ENCODE measurements at regions of chr12 and their contacts with region 1.

Region 1: DNA sequence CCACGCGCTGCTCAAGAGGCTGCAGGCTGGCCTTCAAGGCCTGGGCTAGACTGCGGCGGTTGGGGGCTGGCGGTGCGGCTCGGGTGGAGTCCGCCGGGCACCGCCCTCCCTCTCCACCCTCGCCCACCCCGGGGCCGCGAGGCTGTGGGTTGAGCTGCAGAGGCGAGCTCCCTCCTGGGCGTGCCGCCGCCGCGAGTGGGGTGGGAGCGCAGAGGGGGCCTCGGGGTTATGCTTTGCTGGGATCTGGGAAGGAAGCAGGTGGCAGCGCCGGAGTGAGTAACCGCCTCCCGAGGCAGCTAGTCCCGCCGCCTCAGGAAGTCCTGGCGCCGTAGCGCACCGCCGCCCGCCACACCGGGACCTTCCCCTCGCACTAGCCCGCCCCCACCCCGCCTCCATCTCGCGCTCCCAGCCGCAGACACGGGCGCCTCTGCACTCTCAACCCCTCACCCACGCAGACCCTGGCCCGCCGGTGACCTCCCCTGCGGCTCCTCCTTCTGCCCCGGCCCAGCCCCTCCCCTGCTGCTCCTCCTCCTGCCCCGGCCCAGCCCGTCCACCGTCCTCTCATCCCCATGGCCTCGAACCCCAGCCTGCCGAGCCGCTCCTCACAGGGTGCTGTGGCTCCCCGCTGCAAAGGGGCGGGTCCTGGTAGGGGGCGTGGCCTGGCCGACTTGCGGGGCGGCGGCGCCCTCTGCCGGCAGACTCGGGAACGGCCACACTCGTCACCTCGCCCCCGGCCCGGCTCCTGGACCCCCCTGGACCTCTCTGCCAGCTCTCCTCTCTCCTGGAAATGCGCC is 16.6 kb downstream of the TAMALIN start:
- DNase-seq: peak; percentile 59
- ATAC-seq: peak; percentile 56
- H3K4me3 ChIP-seq: peak overlapping the region; percentile 57 to 85 (median 63)
- H3K27ac ChIP-seq: peak overlapping the region; percentile 16
- H3K4me1 ChIP-seq: peaks cover 59% of the 10 kb centered on the region
- H3K27me3 ChIP-seq: no peaks in the 10 kb centered on the region; a peak in 1 of 5 replicates
- CTCF ChIP-seq: peak; percentile 99
- EP300 ChIP-seq: no peak
- POLR2A ChIP-seq: no peak
- RAD21 ChIP-seq: peak; percentile 94

Region 2: GRCh38 chr12:51994959-51995358 is 28.4 kb before region 1 on chr12:
- CTCF ChIA-PET with region 1: interaction called, 99 read pairs
- POLR2A ChIA-PET with region 1: interaction called, 5 read pairs
- in situ Hi-C with region 1: no loop called
- intact Hi-C with region 1: loop called (anchors 1 kb)
- DNase-seq: no peak
- ATAC-seq: no peak
- H3K4me3 ChIP-seq: no peak overlapping the region
- H3K27ac ChIP-seq: no peak overlapping the region
- H3K4me1 ChIP-seq: no peaks in the 10 kb centered on the region
- H3K27me3 ChIP-seq: no peaks in the 10 kb centered on the region
- CTCF ChIP-seq: no peak
- EP300 ChIP-seq: no peak
- POLR2A ChIP-seq: no peak
- RAD21 ChIP-seq: no peak

Region 3: DNA sequence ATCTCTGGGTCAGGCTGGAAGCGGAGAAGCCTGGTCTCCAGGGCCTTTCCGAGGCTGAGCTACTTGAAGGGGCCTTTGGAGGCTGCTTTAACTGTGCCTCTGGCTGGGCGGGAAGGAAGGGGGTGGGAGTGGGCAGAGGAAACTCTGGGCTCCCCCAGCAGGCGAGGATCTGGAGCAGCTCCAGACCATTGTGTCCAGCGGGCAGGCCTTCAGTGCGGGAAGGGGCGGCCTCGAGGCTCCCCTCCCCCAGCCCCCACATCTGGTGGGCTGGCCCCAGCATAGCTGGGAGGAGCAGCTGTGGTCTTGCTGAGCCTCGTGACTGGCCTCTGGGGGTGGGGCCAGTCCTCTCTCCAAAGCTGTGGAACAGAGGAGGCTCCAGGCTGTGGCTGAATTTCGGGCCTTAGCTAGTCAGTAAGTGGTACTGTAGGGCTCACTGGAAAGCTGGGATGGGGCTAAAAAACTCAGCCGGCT is 13.2 kb before region 1 on chr12:
- CTCF ChIA-PET with region 1: interaction called, 99 read pairs
- POLR2A ChIA-PET with region 1: interaction called, 45 read pairs
- in situ Hi-C with region 1: no loop called
- intact Hi-C with region 1: no loop called
- DNase-seq: peak; percentile 72
- ATAC-seq: peak; percentile 84
- H3K4me3 ChIP-seq: peak overlapping the region; percentile 19 to 64 (median 50); a peak in 5 of 6 replicates
- H3K27ac ChIP-seq: peak overlapping the region; percentile 62
- H3K4me1 ChIP-seq: peaks cover 49% of the 10 kb centered on the region
- H3K27me3 ChIP-seq: 0 out of 5 replicates have a peak, but pooled peaks cover 0 to 1% of the 10 kb centered on the region in 2 experiments
- CTCF ChIP-seq: peak; percentile 37
- EP300 ChIP-seq: no peak
- POLR2A ChIP-seq: peak in 1 of 2 experiments; percentile 47; a peak in 2 of 4 replicates
- RAD21 ChIP-seq: no peak

Region 4: DNA sequence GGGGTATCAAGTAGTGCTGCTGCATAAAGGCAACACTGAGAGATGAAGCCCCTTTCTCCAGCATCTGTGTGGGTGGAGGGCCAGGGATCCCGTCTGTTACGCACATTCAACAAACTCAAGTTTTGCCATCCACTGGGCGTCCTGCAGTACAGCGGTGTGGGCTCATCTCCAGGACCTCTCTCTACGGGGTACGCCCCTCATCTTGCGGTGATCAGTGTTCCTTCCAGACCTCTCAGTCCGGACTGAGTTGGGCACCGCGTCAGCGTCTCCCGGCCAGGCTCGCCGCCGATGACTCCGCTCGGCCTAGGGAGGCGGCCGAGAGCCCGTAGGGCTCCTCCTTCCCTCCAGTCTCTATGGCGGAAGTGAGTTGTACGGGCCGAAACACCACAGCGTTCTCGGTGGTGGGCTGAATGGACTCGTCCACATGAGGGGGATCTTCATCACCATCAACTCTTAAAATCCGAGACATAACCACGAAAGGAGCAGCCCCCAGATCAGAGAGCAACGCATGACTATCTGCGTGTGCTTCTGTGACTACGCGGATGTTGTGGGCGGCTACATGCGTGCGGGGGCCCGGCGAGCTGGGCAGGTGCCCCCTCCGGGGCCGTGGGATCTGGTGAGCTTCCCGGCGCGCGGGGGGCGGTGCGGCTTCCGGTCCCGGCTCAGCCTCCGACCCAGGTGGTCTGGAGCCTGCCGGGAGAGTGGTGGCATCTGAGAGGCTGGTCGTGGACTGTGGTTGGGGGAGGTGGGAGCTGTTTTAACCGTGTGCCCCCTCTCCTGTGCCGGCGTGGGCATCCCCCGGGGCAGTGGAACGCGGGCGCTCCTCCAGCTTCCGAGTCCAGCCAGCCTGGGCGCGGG is 46.2 kb after region 1 on chr12 and contains the start of gene ATG101:
- CTCF ChIA-PET with region 1: interaction called, 52 read pairs
- POLR2A ChIA-PET with region 1: interaction called, 13 read pairs
- in situ Hi-C with region 1: no loop called
- intact Hi-C with region 1: loop called (anchors 1 kb)
- DNase-seq: peak; percentile 90
- ATAC-seq: peak; percentile 97
- H3K4me3 ChIP-seq: peak within 1 kb of the TSS; percentile 87 to 98 (median 88)
- H3K27ac ChIP-seq: peak within 1 kb of the TSS; percentile 85
- H3K4me1 ChIP-seq: peaks cover 46% of the 10 kb centered on the region
- H3K27me3 ChIP-seq: no peaks in the 10 kb centered on the region; a peak in 1 of 5 replicates
- CTCF ChIP-seq: peak; percentile 93
- EP300 ChIP-seq: peak in 1 of 2 experiments; percentile 22; a peak in 1 of 4 replicates
- POLR2A ChIP-seq: peak; percentile 72 to 77
- RAD21 ChIP-seq: peak; percentile 54; the same call in 1 of the 2 replicates
- total RNA-seq, gene ATG101: 66.7 and 67.7 TPM in 2 replicates

Region 5: DNA sequence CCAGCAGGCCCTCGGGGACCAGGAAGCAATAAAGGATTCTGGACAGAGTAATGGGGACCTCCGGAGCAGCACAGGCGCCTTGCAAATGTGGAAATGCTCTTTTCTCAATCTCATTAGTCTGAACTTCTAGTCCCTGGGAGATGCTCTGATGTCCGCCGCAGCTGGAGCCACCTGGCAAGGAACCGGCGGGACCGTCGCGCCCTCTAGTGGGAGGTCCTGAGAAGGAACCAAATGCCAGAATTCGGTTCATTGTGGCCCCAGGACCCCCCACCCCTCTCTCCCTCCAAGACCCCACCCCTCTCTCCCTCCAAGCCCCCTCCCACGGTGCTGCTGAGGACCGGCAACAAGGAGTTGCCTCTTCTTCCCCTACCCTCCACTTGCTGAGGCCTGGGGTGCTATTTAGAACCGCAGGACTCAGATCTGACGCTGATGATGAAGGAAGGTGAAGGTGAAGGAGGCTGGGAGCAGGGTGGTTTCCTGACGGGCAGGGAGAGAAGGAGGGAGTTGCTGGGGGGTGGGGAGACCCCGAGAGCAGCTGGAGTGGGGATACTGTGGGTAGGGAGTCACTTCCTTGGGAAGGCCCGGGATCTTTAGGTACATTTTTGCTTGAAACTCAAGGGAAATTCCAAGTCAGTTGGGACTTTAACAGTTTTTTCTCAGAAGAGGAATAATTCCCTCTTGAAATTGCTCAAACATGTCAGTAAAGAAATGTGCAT is 98.6 kb after region 1 on chr12:
- CTCF ChIA-PET with region 1: interaction called, 41 read pairs
- POLR2A ChIA-PET with region 1: interaction called, 6 read pairs
- in situ Hi-C with region 1: loop called (anchors 5 kb)
- intact Hi-C with region 1: loop called (anchors 1 kb)
- DNase-seq: no peak
- ATAC-seq: 0 out of 3 replicates have a peak, but pooled peaks have one; percentile 6
- H3K4me3 ChIP-seq: peak overlapping the region in 1 of 3 experiments; percentile 6; a peak in 1 of 6 replicates
- H3K27ac ChIP-seq: no peak overlapping the region
- H3K4me1 ChIP-seq: peaks cover 71% of the 10 kb centered on the region
- H3K27me3 ChIP-seq: peaks cover 4 to 26% of the 10 kb centered on the region in 2 experiments; a peak in 3 of 5 replicates
- CTCF ChIP-seq: peak; percentile 85
- EP300 ChIP-seq: no peak
- POLR2A ChIP-seq: no peak
- RAD21 ChIP-seq: peak; percentile 50